ENCODE measurements at regions of chr12 and their contacts with region 1.

Region 1: DNA sequence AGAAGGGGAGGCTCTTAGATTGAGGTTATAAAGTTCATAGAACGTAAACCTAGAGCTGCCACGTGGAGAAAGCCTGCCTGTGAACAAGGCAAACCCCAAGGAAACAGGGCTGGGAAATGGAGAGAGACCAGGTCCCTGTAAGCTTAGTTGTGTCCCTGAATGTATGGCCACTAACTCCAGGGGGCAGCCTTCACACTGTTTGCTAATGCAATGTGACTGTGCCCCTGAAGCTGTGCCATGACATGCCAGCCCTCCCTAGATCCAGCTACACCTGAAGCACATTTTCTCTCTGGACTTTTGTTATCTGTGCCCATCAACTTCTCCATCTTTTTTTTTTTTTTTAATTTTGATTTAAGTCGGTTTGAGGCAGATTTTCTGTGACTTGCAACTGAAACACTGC is 60.6 kb upstream of the TMCC3 start:
- DNase-seq: no peak
- H3K4me3 ChIP-seq: no peak overlapping the region
- H3K27ac ChIP-seq: no peak overlapping the region
- H3K4me1 ChIP-seq: 0 out of 7 replicates have a peak, but pooled peaks cover 0 to 2% (median 0%) of the 10 kb centered on the region in 4 experiments
- H3K27me3 ChIP-seq: no peaks in the 10 kb centered on the region
- CTCF ChIP-seq: peak; percentile 48 to 70 (median 63)
- EP300 ChIP-seq: no peak
- POLR2A ChIP-seq: no peak
- RAD21 ChIP-seq: peak; percentile 54 to 67

Region 2: DNA sequence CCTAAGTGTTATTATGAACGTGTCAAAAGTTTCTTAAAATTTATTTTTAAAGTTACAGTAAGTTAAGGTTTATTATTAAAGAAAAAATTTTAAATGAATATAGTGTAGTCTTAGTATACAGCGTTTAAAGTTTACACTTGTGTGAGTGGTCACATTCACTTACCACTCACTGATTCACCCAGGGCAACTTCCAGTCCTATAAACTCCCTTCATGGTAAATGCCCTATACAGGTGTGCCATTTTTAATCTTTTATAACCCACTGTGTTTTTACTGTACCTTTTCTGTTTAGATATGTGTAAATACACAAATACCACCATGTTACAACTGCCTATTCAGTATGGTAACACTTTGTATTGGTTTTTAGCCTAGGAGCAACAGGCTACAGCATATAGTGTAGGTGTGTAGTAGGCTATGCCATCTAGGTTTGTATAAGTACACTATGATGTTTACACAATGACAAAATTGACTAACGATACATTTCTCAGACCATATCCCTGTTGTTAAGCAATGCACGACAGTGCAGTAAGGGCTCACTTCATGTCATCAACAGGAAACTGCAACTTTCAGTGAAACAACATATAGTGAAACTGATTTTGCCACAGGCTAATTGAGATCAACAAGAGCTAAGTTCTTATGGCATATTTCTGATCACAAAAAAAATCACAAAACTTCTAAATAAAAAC is 51.5 kb after region 1 on chr12:
- CTCF ChIA-PET with region 1: interaction called, 14 read pairs
- POLR2A ChIA-PET with region 1: no interaction called
- DNase-seq: no peak
- H3K4me3 ChIP-seq: no peak overlapping the region
- H3K27ac ChIP-seq: no peak overlapping the region
- H3K4me1 ChIP-seq: no peaks in the 10 kb centered on the region
- H3K27me3 ChIP-seq: no peaks in the 10 kb centered on the region; a peak in 1 of 7 replicates
- CTCF ChIP-seq: no peak
- EP300 ChIP-seq: no peak
- POLR2A ChIP-seq: no peak
- RAD21 ChIP-seq: no peak

Region 3: DNA sequence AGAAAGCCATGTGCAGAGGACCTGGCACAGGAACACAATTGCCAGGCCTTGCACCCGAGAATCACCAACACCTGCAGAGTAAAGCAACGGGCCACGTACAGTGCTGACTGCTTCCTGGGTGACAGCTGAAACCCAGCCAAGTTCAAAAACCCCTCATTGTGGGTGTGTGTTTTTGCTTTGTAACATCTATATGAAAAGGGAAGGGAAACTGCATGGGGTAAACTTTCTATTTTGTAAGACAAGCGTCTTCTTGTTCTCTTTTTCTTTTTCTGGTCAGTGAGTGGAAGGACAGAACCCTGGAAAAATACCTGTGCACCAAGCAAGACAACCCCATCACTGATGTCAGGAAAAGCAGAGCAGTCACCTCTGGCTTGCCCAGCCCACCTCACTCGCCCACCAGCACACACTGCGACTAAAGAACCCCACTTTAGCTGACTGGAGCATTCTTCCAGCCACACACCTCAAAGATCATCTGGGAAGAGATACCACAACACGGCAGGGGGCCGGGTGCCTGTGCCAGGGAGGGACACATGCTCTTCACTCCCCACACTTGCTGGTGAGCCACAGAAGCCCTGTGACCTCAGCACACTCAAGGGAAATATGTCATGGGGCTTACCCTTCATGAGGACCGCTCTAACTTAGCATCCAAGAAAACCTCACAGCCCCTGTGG is 120.3 kb after region 1 on chr12:
- CTCF ChIA-PET with region 1: no interaction called
- POLR2A ChIA-PET with region 1: no interaction called
- DNase-seq: no peak
- H3K4me3 ChIP-seq: no peak overlapping the region
- H3K27ac ChIP-seq: no peak overlapping the region
- H3K4me1 ChIP-seq: peaks cover 0 to 13% (median 7%) of the 10 kb centered on the region in 4 experiments
- H3K27me3 ChIP-seq: no peaks in the 10 kb centered on the region
- CTCF ChIP-seq: no peak
- EP300 ChIP-seq: no peak
- POLR2A ChIP-seq: no peak
- RAD21 ChIP-seq: no peak

Measured in H1 (cell line).